Caco-2 (cell line): ENCODE measurements at regions of chr1 and their contacts with region 1.

Region 1: GRCh38 chr1:226870401-226871279 is at the start of gene PSEN2:
- DNase-seq: peak; percentile 66 to 86
- H3K4me3 ChIP-seq: peak within 1 kb of the TSS; percentile 60
- H3K4me3 Mint-ChIP-seq: peak within 1 kb of the TSS; percentile 87
- H3K27ac Mint-ChIP-seq: peak within 1 kb of the TSS; percentile 88
- H3K4me1 ChIP-seq: peaks cover 3% of the 10 kb centered on the region
- H3K4me1 Mint-ChIP-seq: peaks cover 7% of the 10 kb centered on the region
- H3K27me3 ChIP-seq: no peaks in the 10 kb centered on the region
- H3K27me3 Mint-ChIP-seq: no peaks in the 10 kb centered on the region
- CTCF ChIP-seq: no peak
- total RNA-seq, gene PSEN2: 34.7 and 37.5 TPM in 2 replicates

Region 2: GRCh38 chr1:226940029-226940805 is 69.6 kb after region 1 on chr1 and contains the start of gene COQ8A:
- CTCF ChIA-PET with region 1: no interaction called
- POLR2A ChIA-PET with region 1: no interaction called
- intact Hi-C with region 1: loop called (anchors 5 kb)
- DNase-seq: peak; percentile 99
- H3K4me3 ChIP-seq: peak within 1 kb of the TSS; percentile 86
- H3K4me3 Mint-ChIP-seq: peak within 1 kb of the TSS; percentile 96
- H3K27ac Mint-ChIP-seq: peak within 1 kb of the TSS; percentile 91
- H3K4me1 ChIP-seq: peaks cover 32% of the 10 kb centered on the region
- H3K4me1 Mint-ChIP-seq: peaks cover 42% of the 10 kb centered on the region
- H3K27me3 ChIP-seq: no peaks in the 10 kb centered on the region
- H3K27me3 Mint-ChIP-seq: no peaks in the 10 kb centered on the region
- CTCF ChIP-seq: no peak
- total RNA-seq, gene COQ8A: 50.0 and 57.2 TPM in 2 replicates